Ascending aorta (tissue), 2 donors: ENCODE measurements at regions of chr16 and their contacts with region 1.

Region 1: DNA sequence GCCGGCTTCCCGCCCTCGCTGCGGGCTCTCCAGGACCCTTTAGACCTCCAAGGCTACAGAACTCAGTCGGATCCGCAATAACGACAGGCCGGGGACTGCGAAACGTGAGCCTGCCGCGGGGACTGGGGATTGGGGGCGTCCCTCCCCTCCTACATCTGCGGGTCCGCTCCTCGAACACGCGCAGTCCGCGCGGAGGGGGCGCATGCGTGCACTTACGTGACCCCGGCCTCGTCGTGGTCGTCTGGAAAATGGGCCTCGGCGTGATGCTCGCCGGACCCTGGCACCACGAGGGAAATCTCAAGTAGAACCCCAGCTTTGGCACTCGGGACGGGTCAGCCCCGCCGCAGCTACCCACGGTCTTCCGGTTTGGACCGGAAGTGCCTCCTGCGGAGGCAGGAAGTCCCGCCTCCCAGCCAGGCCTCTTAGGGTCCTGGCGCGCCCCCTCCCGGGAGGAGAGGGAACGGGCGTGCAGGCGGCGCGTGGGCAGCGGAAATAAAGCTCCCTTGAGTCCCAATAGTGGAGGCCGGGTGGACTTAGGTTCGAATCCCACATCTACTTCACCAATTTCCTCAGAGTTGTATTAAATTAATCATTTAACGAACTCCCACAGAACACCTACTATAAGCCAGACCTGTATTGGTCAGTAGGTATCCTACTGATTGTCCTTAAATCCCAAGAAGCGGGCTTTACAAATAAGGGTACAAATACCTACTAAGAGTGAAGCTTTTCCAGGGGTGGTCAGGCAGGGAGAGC is at the start of gene TAF1C:
- DNase-seq: peak; percentile 71 to 97
- H3K4me3 ChIP-seq: peak within 1 kb of the TSS; percentile 93 to 96
- H3K27ac ChIP-seq: peak within 1 kb of the TSS; percentile 67 to 82
- H3K4me1 ChIP-seq: peaks cover 5 to 10% of the 10 kb centered on the region in 2 donors
- H3K27me3 ChIP-seq: no peaks in the 10 kb centered on the region
- CTCF ChIP-seq: peak; percentile 89 to 99 (median 98)
- total RNA-seq, gene TAF1C: 151 TPM

Region 2: DNA sequence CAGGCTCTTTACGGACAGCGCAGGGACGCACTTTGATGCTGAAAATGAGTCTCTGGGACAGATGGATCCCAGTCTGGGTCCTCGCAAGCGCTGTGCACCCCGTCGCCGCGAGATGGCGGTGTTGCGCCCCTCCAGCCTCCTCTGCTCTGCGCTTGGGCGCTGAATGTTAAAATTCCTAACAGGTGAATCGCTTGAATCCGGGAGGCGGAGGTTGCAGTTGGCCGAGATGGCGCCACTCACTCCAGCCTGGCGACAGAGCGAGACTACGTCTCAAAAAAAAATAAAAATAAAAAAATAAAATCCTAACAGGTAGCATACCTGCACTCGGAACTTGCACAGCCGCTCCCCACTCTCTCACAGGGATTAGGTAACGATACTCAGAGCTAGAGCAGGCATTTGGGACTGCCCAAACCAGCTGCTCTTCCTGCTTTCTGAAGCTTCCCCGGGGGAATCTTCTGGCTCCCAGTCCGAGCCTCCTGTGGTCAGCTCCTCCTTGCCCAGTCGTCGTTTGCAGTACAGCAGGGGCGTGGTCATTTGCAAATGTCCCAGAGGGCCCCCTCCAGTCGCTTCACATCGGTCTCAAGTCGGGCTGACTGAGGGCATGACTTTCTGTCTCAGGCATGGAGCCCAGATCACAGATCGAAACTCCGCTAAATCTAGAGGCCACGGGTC is 260.0 kb before region 1 on chr16:
- intact Hi-C with region 1: loop called (anchors 10 kb)
- DNase-seq: peak in 1 of 2 donors; percentile 83
- H3K4me3 ChIP-seq: peak overlapping the region in 1 of 2 donors; percentile 31
- H3K27ac ChIP-seq: no peak overlapping the region
- H3K4me1 ChIP-seq: peaks cover 0 to 6% of the 10 kb centered on the region in 2 donors
- H3K27me3 ChIP-seq: no peaks in the 10 kb centered on the region
- CTCF ChIP-seq: peak; percentile 81 to 98 (median 96)

Region 3: DNA sequence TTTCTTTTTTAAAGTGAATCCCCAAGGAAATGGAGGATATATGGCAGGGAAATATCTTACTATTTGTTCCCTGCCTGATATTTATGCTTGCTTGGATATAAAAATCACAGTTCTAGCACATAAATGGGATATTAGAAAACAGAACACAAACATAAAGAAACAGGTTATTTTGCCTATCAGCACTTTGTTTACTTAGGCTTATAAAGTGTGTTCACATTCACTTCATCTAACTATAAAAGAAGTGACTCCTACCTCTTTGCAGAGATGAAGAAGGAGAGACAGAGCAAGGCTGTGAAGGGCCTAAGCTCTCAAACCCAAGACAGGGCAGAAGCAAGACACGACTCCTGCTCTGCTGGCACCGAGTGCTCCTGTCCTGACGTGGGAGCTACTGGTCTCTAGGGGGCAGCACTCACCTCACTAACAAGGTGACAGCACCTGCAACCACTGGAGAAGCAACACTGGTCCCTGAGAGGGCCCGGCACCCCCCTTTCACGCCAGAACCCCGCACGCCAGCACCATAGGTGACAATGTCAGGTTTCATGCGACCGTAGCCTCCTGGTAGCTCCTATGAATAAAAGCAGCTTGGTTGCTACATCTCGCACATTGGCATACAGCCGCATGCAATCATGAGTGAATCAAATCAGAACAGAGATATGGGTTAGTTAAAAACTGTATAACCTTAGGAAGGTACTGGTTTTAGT is 102.1 kb before region 1 on chr16:
- intact Hi-C with region 1: loop called (anchors 1 kb)
- DNase-seq: no peak
- H3K4me3 ChIP-seq: no peak overlapping the region
- H3K27ac ChIP-seq: no peak overlapping the region
- H3K4me1 ChIP-seq: peaks cover 4 to 5% of the 10 kb centered on the region in 2 donors
- H3K27me3 ChIP-seq: no peaks in the 10 kb centered on the region
- CTCF ChIP-seq: peak in 2 of 3 experiments; percentile 50 to 55

Region 4: GRCh38 chr16:84116720-84117493 is 70.0 kb before region 1 on chr16 and contains the start of gene MBTPS1:
- intact Hi-C with region 1: loop called (anchors 2 kb)
- DNase-seq: peak; percentile 89 to 99
- H3K4me3 ChIP-seq: peak within 1 kb of the TSS; percentile 84 to 90
- H3K27ac ChIP-seq: peak within 1 kb of the TSS; percentile 86 to 93
- H3K4me1 ChIP-seq: peaks cover 0 to 13% of the 10 kb centered on the region in 2 donors
- H3K27me3 ChIP-seq: no peaks in the 10 kb centered on the region
- CTCF ChIP-seq: no peak
- total RNA-seq, gene MBTPS1: 95.6 TPM

Region 5: GRCh38 chr16:84144859-84145639 is 41.8 kb before region 1 on chr16 and contains the starts of genes DNAAF1 and HSDL1:
- intact Hi-C with region 1: loop called (anchors 1 kb)
- DNase-seq: peak; percentile 42 to 93
- H3K4me3 ChIP-seq: peak within 1 kb of the TSS; percentile 61 to 97
- H3K27ac ChIP-seq: peak within 1 kb of the TSS; percentile 27 to 76
- H3K4me1 ChIP-seq: peaks cover 0 to 7% of the 10 kb centered on the region in 2 donors
- H3K27me3 ChIP-seq: no peaks in the 10 kb centered on the region
- CTCF ChIP-seq: no peak
- total RNA-seq, gene DNAAF1: not detected
- total RNA-seq, gene HSDL1: 12.0 TPM

Region 6: DNA sequence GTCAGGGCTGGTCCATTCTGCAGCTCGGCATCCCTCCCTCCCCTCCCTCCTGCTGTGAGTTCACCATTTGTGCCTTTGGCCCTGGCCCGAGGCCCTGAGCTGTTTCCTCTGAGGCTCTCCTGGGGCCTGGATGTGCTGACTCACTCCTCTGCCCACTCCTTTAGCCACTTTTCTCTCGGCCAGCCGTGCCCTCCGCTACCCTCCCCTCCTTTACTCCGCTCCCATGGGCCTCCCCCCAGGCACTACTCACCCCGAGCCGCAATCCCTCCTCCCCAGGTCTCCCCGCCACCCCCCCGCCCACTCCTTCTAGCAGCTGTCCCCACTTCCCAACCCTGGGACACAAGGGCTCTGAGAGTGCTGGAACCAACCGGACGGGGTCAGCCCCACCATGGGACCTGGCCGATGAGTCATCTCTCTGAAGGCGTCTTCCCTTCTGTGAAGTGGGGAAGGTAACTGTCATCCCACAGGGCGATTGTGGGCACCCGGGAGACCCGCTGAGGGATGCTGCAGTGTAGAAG is 41.5 kb after region 1 on chr16:
- intact Hi-C with region 1: loop called (anchors 2 kb)
- DNase-seq: peak; percentile 52 to 92
- H3K4me3 ChIP-seq: peak overlapping the region; percentile 0 to 39
- H3K27ac ChIP-seq: peak overlapping the region; percentile 63 to 64
- H3K4me1 ChIP-seq: peaks cover 5 to 6% of the 10 kb centered on the region in 2 donors
- H3K27me3 ChIP-seq: no peaks in the 10 kb centered on the region
- CTCF ChIP-seq: no peak